ENCODE measurements at regions of chr13 and their contacts with region 1.

Region 1: DNA sequence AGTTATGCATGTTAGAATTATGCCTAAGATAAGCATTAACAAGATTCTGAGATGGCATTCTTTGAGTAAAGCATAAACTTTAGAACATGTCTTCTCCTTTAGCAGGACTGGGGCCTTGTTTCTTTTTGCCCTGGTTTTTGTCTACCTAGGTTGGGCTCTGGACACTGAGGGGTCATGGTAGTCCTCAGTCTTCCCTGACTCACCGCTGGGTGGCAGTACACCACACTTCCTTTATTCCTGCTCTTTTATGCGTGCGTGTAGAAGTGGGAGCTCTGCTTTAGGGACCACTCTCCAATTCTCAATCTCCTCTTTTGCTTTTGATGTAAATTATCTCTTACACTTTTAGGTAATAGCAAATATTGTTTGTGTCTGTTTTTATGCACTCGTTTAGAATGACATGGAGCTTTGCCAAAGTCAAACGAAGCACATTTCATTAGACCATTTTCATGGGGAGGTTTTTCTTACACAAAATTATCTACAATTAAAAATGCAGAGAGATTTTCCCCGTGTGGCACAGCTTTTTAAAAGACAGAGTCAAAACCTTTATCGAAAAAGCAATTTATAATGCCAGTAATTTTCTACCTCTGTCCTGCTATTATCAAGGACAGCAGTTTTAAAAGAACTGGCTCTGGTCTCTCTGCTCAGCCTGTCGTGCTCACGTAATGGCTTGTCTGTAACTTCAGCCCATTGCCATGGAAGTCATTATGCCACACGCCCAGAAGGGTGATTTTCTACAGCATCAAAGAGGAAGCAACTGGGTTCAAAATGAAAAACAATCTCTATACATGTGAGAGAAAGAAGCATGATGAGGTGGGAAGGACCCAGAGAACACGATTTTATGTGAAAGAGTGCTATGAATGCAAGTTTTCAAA is 413.9 kb downstream of the COG6 start:
- DNase-seq: peak; percentile 46 to 76 (median 64)
- ATAC-seq: peak; percentile 96
- H3K4me3 ChIP-seq: no peak overlapping the region
- H3K4me3 Mint-ChIP-seq: peak overlapping the region; percentile 34 to 86 (median 68)
- H3K27ac ChIP-seq: no peak overlapping the region
- H3K27ac Mint-ChIP-seq: peak overlapping the region; percentile 22 to 88 (median 64)
- H3K4me1 ChIP-seq: peaks cover 0 to 22% of the 10 kb centered on the region in 2 donors
- H3K4me1 Mint-ChIP-seq: peaks cover 6 to 44% (median 29%) of the 10 kb centered on the region in 7 donors
- H3K27me3 ChIP-seq: no peaks in the 10 kb centered on the region
- H3K27me3 Mint-ChIP-seq: no peaks in the 10 kb centered on the region

Region 2: DNA sequence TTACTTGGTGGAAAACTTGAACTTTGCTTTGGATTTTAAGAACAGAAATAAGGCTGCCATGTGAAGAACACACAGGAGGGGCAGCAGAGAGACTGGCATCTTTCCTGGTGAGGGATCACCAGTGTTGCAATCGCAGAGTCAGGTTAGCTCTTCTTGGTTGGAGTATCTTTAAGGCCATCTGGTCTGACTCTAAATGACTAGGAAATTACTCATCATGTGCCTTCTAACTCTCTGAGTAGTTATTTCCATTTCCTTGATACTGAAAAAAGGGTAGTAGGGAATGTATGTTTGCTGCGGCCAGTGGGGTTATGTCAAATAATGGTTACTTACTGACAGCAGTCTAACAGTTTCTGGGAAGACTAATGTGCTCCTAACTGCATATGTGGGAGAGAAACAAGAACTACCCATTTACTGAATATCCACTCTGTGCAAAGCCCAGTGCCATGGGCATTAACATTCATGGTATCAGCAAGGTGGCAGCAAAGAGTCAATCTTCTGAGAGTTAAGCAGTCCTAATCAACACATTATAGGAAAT is 291.8 kb before region 1 on chr13:
- CTCF ChIA-PET with region 1: interaction called, 9 read pairs
- POLR2A ChIA-PET with region 1: interaction called, 3 read pairs
- intact Hi-C with region 1: loop called in 1 of 2 experiments (anchors 1 kb)
- DNase-seq: peak in 7 of 9 donors; percentile 7 to 58 (median 48)
- ATAC-seq: peak; percentile 62
- H3K4me3 ChIP-seq: no peak overlapping the region
- H3K4me3 Mint-ChIP-seq: peak overlapping the region in 2 of 10 donors; percentile 6 to 18
- H3K27ac ChIP-seq: no peak overlapping the region
- H3K27ac Mint-ChIP-seq: peak overlapping the region in 8 of 9 donors; percentile 8 to 60 (median 18)
- H3K4me1 ChIP-seq: peaks cover 0 to 22% of the 10 kb centered on the region in 2 donors
- H3K4me1 Mint-ChIP-seq: peaks cover 12 to 40% (median 36%) of the 10 kb centered on the region in 7 donors
- H3K27me3 ChIP-seq: no peaks in the 10 kb centered on the region
- H3K27me3 Mint-ChIP-seq: no peaks in the 10 kb centered on the region

Region 3: DNA sequence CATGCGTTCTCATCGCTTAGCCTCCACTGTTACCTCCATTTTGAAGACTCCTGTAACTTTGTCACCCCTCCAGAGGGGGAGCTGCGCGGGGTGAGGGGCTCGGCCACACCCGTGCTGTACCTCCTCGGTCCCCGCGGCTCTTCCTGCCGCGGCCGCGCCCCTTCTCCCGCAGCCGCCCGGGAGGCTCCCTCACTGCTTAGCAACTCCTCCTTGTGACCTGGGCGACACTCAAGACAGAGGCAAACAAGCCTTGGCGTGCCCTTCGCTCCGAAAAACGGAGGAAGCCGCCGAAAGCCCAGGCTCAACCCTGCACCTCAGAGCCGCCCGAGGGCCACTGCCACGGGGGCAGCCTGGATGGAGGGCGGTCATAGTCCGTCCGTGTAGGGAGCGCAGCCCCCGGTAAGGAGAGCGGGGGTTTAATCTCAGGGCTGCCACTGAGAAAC is 102.8 kb after region 1 on chr13:
- CTCF ChIA-PET with region 1: interaction called, 10 read pairs
- POLR2A ChIA-PET with region 1: no interaction called
- intact Hi-C with region 1: no loop called
- DNase-seq: no peak
- ATAC-seq: peak; percentile 24
- H3K4me3 ChIP-seq: no peak overlapping the region
- H3K4me3 Mint-ChIP-seq: peak overlapping the region in 5 of 10 donors; percentile 18 to 57 (median 38)
- H3K27ac ChIP-seq: no peak overlapping the region
- H3K27ac Mint-ChIP-seq: peak overlapping the region in 1 of 9 donors; percentile 47
- H3K4me1 ChIP-seq: no peaks in the 10 kb centered on the region
- H3K4me1 Mint-ChIP-seq: peaks cover 13 to 62% (median 43%) of the 10 kb centered on the region in 7 donors
- H3K27me3 ChIP-seq: no peaks in the 10 kb centered on the region
- H3K27me3 Mint-ChIP-seq: peaks cover 0 to 4% (median 0%) of the 10 kb centered on the region in 5 donors

Region 4: GRCh38 chr13:40485611-40486517 is 416.5 kb after region 1 on chr13:
- CTCF ChIA-PET with region 1: no interaction called
- POLR2A ChIA-PET with region 1: interaction called, 3 read pairs
- intact Hi-C with region 1: loop called in 1 of 2 experiments (anchors 1 kb)
- DNase-seq: peak; percentile 29 to 93 (median 88)
- ATAC-seq: peak; percentile 97
- H3K4me3 ChIP-seq: peak overlapping the region; percentile 28
- H3K4me3 Mint-ChIP-seq: peak overlapping the region; percentile 67 to 88 (median 78)
- H3K27ac ChIP-seq: peak overlapping the region; percentile 71
- H3K27ac Mint-ChIP-seq: peak overlapping the region; percentile 91 to 100 (median 96)
- H3K4me1 ChIP-seq: peaks cover 45 to 89% of the 10 kb centered on the region in 2 donors
- H3K4me1 Mint-ChIP-seq: peaks cover 61 to 99% (median 90%) of the 10 kb centered on the region in 7 donors
- H3K27me3 ChIP-seq: no peaks in the 10 kb centered on the region
- H3K27me3 Mint-ChIP-seq: no peaks in the 10 kb centered on the region

Region 5: GRCh38 chr13:40564342-40565001 is 495.1 kb after region 1 on chr13:
- CTCF ChIA-PET with region 1: interaction called, 3 read pairs
- POLR2A ChIA-PET with region 1: no interaction called
- intact Hi-C with region 1: loop called in 1 of 2 experiments (anchors 10 kb)
- DNase-seq: peak in 1 of 9 donors; percentile 45
- ATAC-seq: peak; percentile 65
- H3K4me3 ChIP-seq: no peak overlapping the region
- H3K4me3 Mint-ChIP-seq: peak overlapping the region in 9 of 10 donors; percentile 51 to 81 (median 72)
- H3K27ac ChIP-seq: peak overlapping the region; percentile 46
- H3K27ac Mint-ChIP-seq: peak overlapping the region; percentile 27 to 96 (median 81)
- H3K4me1 ChIP-seq: peaks cover 36 to 61% of the 10 kb centered on the region in 2 donors
- H3K4me1 Mint-ChIP-seq: peaks cover 61 to 96% (median 92%) of the 10 kb centered on the region in 7 donors
- H3K27me3 ChIP-seq: no peaks in the 10 kb centered on the region
- H3K27me3 Mint-ChIP-seq: no peaks in the 10 kb centered on the region

Region 6: DNA sequence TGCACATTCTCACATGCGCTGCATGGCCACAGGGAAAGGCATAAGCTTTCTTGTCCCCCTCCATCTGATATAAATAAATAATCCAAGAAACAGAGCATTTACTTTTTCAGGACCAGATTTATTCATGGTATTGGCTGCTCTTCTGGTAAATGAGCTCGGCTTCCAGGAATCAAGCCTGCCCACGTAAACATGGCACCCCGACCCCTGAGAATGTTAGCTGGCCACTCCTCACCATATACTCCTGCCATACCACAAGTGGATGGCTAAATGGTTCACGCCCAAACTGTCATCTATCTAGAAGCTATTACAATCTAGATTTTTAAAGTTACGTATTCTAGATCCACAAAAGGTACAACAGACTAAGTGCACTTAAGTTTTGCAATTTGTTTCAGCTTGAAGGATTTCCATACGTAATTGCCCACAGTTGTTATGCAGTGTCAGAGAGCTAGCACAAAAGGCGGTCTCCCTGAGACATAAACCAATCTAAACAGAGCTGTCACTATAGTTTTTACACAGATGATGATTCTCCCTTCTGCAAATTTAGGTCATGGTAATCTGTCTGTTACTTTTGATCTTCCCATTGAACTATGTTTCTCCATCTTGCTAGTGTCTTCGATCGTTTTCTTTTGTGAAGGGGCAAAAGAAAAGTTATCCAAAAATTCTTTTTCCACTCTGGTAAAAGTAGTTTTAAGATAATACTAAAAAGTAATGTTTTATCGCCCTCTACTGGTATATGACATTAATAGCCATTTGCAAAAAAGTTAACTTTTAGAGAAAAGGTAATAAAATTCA is 613.2 kb after region 1 on chr13:
- CTCF ChIA-PET with region 1: interaction called, 59 read pairs
- POLR2A ChIA-PET with region 1: no interaction called
- intact Hi-C with region 1: loop called (anchors 1 kb)
- DNase-seq: peak in 6 of 9 donors; percentile 32 to 60 (median 52)
- ATAC-seq: peak; percentile 52
- H3K4me3 ChIP-seq: no peak overlapping the region
- H3K4me3 Mint-ChIP-seq: peak overlapping the region in 5 of 10 donors; percentile 2 to 45 (median 18)
- H3K27ac ChIP-seq: no peak overlapping the region
- H3K27ac Mint-ChIP-seq: peak overlapping the region in 2 of 9 donors; percentile 37 to 45
- H3K4me1 ChIP-seq: peaks cover 0 to 6% of the 10 kb centered on the region in 2 donors
- H3K4me1 Mint-ChIP-seq: peaks cover 8 to 17% (median 14%) of the 10 kb centered on the region in 7 donors
- H3K27me3 ChIP-seq: no peaks in the 10 kb centered on the region
- H3K27me3 Mint-ChIP-seq: no peaks in the 10 kb centered on the region

Region 7: GRCh38 chr13:40812102-40812501 is 742.7 kb after region 1 on chr13:
- CTCF ChIA-PET with region 1: no interaction called
- POLR2A ChIA-PET with region 1: no interaction called
- intact Hi-C with region 1: no loop called
- DNase-seq: no peak
- ATAC-seq: no peak
- H3K4me3 ChIP-seq: no peak overlapping the region
- H3K4me3 Mint-ChIP-seq: no peak overlapping the region
- H3K27ac ChIP-seq: no peak overlapping the region
- H3K27ac Mint-ChIP-seq: peak overlapping the region in 4 of 9 donors; percentile 41 to 57 (median 50)
- H3K4me1 ChIP-seq: no peaks in the 10 kb centered on the region
- H3K4me1 Mint-ChIP-seq: peaks cover 0 to 3% (median 0%) of the 10 kb centered on the region in 7 donors
- H3K27me3 ChIP-seq: no peaks in the 10 kb centered on the region
- H3K27me3 Mint-ChIP-seq: no peaks in the 10 kb centered on the region